ENCODE measurements at regions of chr9 and their contacts with region 1.

Region 1: DNA sequence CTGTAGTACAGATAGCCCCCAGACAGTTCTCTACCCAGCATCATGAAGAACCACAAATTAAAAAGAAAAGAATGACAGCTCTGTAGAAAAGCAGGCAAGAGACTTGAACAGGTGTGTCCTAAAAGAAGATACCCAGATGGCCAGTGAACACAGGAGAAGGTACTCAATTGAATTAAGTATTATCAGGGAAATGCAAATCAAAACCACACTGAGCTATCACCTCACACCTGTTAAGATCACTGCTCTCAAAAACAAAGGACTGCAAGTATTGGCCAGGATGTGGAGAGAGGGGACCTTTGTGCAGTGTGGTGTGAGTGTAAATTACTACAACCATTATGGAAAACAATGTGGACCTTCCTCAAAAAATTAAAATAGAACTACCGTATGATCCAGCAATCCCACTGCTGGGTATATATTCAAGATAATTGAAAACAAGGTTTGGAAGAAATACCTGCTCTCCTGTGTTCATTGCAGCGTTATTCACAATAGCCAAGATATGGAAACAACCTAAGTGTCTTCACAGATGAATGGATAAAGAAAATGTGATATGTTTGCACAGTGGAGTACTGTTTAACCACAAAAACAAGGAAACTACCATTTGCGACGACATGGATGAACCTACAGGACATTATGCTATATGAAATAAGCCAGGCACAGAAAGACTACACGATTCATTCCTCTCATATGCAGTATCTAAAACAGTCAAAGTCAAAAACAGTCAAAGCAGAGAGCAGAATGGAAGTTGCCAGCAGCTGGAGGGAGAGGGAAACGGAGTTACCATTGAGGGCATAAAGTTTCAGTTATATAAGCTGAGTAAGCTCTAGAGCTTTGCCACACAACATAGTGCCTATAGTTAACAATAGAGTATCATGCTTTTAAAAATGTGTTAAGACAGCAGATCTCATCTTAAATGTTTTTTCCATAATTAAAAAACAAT is 102.6 kb downstream of the WNK2 start:
- DNase-seq: no peak
- H3K4me3 ChIP-seq: no peak overlapping the region
- H3K27ac ChIP-seq: no peak overlapping the region
- H3K4me1 ChIP-seq: no peaks in the 10 kb centered on the region
- H3K27me3 ChIP-seq: no peaks in the 10 kb centered on the region
- CTCF ChIP-seq: no peak
- EP300 ChIP-seq: no peak
- POLR2A ChIP-seq: no peak

Region 2: GRCh38 chr9:93262537-93263242 is 23.8 kb before region 1 on chr9:
- in situ Hi-C with region 1: no loop called
- intact Hi-C with region 1: loop called (anchors 1 kb)
- DNase-seq: no peak
- H3K4me3 ChIP-seq: no peak overlapping the region
- H3K27ac ChIP-seq: peak overlapping the region in 2 of 4 donors; percentile 4 to 28
- H3K4me1 ChIP-seq: peaks cover 0 to 9% (median 3%) of the 10 kb centered on the region in 4 donors
- H3K27me3 ChIP-seq: no peaks in the 10 kb centered on the region
- CTCF ChIP-seq: no peak
- EP300 ChIP-seq: no peak
- POLR2A ChIP-seq: no peak

Measured in transverse colon (tissue), 4 donors.